PC-3 (cell line): ENCODE measurements at regions of chr12 and their contacts with region 1.

Region 1: GRCh38 chr12:60494244-60494643 is 898.4 kb downstream of the SLC16A7 start:
- DNase-seq: peak; percentile 77
- ATAC-seq: peak; percentile 73
- H3K4me3 ChIP-seq: no peak overlapping the region
- H3K27ac ChIP-seq: no peak overlapping the region
- H3K4me1 ChIP-seq: peaks cover under 1% of the 10 kb centered on the region; the same call in 1 of the 2 replicates
- H3K27me3 ChIP-seq: no peaks in the 10 kb centered on the region
- CTCF ChIP-seq: peak; percentile 87

Region 2: GRCh38 chr12:59431266-59431665 is 1063.0 kb before region 1 on chr12:
- CTCF ChIA-PET with region 1: no interaction called
- POLR2A ChIA-PET with region 1: no interaction called
- intact Hi-C with region 1: loop called (anchors 1 kb)
- DNase-seq: peak; percentile 35
- ATAC-seq: peak; percentile 55
- H3K4me3 ChIP-seq: no peak overlapping the region
- H3K27ac ChIP-seq: no peak overlapping the region
- H3K4me1 ChIP-seq: no peaks in the 10 kb centered on the region
- H3K27me3 ChIP-seq: no peaks in the 10 kb centered on the region
- CTCF ChIP-seq: peak; percentile 58

Region 3: GRCh38 chr12:60106214-60106613 is 388.0 kb before region 1 on chr12:
- CTCF ChIA-PET with region 1: interaction called, 5 read pairs
- POLR2A ChIA-PET with region 1: no interaction called
- intact Hi-C with region 1: loop called (anchors 1 kb)
- DNase-seq: peak; percentile 56
- ATAC-seq: peak; percentile 67
- H3K4me3 ChIP-seq: no peak overlapping the region
- H3K27ac ChIP-seq: no peak overlapping the region
- H3K4me1 ChIP-seq: peaks cover 15% of the 10 kb centered on the region
- H3K27me3 ChIP-seq: no peaks in the 10 kb centered on the region
- CTCF ChIP-seq: peak; percentile 77

Region 4: GRCh38 chr12:60257063-60257462 is 237.2 kb before region 1 on chr12:
- CTCF ChIA-PET with region 1: interaction called, 11 read pairs
- POLR2A ChIA-PET with region 1: no interaction called
- intact Hi-C with region 1: loop called (anchors 1 kb)
- DNase-seq: peak; percentile 80
- ATAC-seq: peak; percentile 86
- H3K4me3 ChIP-seq: no peak overlapping the region
- H3K27ac ChIP-seq: no peak overlapping the region
- H3K4me1 ChIP-seq: peaks cover 20% of the 10 kb centered on the region
- H3K27me3 ChIP-seq: no peaks in the 10 kb centered on the region
- CTCF ChIP-seq: peak; percentile 67

Region 5: DNA sequence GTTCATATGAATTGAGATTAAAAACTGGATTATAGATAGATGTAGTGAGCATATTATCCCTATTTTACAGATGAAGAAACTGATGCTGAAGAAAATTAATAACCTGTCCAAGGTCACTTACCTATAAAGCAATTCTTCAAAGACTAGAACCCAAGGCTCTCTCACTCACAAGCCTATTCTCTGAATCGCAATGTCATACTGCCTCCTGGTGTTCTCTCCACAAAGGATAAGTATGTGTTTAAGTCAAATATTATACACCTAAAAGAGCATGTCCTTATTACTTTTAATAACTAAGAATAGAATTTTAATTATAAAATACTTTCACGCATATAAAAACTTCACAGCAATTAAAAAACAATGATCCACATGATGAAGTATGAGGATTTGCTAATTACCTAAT is 1044.7 kb after region 1 on chr12:
- CTCF ChIA-PET with region 1: no interaction called
- POLR2A ChIA-PET with region 1: no interaction called
- intact Hi-C with region 1: loop called (anchors 10 kb)
- DNase-seq: peak; percentile 60
- ATAC-seq: no peak; the same call in 1 of the 2 replicates
- H3K4me3 ChIP-seq: no peak overlapping the region
- H3K27ac ChIP-seq: no peak overlapping the region
- H3K4me1 ChIP-seq: no peaks in the 10 kb centered on the region
- H3K27me3 ChIP-seq: no peaks in the 10 kb centered on the region
- CTCF ChIP-seq: peak; percentile 64; the same call in 1 of the 2 replicates

Region 6: GRCh38 chr12:61993734-61994345 is 1499.6 kb after region 1 on chr12:
- CTCF ChIA-PET with region 1: no interaction called
- POLR2A ChIA-PET with region 1: no interaction called
- intact Hi-C with region 1: loop called (anchors 10 kb)
- DNase-seq: peak; percentile 61
- ATAC-seq: peak; percentile 88
- H3K4me3 ChIP-seq: no peak overlapping the region
- H3K27ac ChIP-seq: no peak overlapping the region
- H3K4me1 ChIP-seq: no peaks in the 10 kb centered on the region
- H3K27me3 ChIP-seq: peaks cover 9% of the 10 kb centered on the region; the same call in 1 of the 2 replicates
- CTCF ChIP-seq: peak; percentile 75